ENCODE measurements at regions of chr2 and their contacts with region 1.

Region 1: DNA sequence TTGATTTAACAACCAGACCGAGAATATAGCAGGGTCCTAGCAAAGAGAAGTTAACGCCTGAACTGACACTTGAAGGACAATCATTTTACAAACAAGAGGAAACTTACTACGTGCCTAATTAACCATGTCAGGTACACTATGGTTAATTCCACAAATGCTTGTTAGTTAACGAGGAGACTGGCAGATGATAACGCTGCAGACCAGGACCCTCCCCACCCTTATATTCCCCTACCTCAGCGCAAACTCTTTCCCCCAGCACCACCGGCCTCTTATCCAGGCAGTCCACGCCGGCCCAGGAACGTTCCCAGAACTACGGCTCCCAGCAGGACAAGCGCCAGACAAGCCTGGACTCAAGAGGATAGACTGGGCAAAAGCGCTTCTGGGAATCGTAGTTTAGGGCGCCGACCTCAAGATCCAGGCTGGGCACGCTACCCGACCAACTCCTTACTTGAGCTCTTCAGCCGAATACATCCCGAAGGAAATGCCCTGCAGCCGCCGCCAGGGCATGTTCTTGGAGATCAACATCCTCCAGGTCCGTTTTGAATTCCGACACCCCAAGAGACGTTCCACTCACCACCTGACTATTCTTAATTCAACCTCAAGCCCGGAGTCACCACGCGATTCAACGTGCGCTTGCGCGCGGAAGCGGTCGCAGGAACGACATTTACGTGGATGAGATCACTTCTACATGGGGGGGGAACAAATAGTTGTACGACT is at the start of gene POLR1A:
- DNase-seq: peak; percentile 90
- ATAC-seq: peak; percentile 75
- H3K4me3 Mint-ChIP-seq: peak within 1 kb of the TSS; percentile 88
- H3K27ac Mint-ChIP-seq: peak within 1 kb of the TSS; percentile 99
- H3K4me1 Mint-ChIP-seq: peaks cover 54% of the 10 kb centered on the region
- H3K27me3 Mint-ChIP-seq: no peaks in the 10 kb centered on the region
- total RNA-seq, gene POLR1A: 38.1 to 45.5 TPM

Region 2: GRCh38 chr2:85354286-85355072 is 750.9 kb before region 1 on chr2 and contains the starts of genes ELMOD3 and RETSAT:
- CTCF ChIA-PET with region 1: interaction called, 4 read pairs
- POLR2A ChIA-PET with region 1: interaction called, 3 read pairs
- intact Hi-C with region 1: loop called in 1 of 2 experiments (anchors 2 kb)
- DNase-seq: peak; percentile 98
- ATAC-seq: peak; percentile 100
- H3K4me3 Mint-ChIP-seq: peak within 1 kb of the TSS; percentile 89
- H3K27ac Mint-ChIP-seq: peak within 1 kb of the TSS; percentile 99
- H3K4me1 Mint-ChIP-seq: peaks cover 34% of the 10 kb centered on the region
- H3K27me3 Mint-ChIP-seq: no peaks in the 10 kb centered on the region
- total RNA-seq, gene ELMOD3: 11.2 to 12.9 TPM
- total RNA-seq, gene RETSAT: 18.1 to 18.7 TPM

Region 3: DNA sequence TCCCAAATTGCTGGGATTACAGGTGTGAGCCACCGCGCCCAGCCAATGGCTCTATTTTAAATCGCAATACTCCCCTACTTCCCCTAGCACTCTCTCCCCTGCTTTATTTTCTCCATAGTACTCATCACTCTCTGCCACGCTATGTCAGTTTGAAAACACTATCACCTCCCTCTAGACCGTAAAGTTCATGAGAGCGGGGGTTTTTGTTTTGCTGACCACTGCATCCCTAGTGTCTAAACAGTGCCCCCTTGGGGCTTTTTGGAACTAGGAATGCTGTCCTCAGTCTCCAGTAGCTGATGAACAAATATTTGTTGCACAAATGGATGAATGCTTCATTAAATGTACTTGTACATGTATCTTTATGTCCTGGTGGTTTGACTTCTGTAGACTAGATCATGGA is 307.5 kb before region 1 on chr2:
- CTCF ChIA-PET with region 1: no interaction called
- POLR2A ChIA-PET with region 1: no interaction called
- intact Hi-C with region 1: no loop called
- DNase-seq: no peak
- ATAC-seq: no peak
- H3K4me3 Mint-ChIP-seq: no peak overlapping the region
- H3K27ac Mint-ChIP-seq: no peak overlapping the region
- H3K4me1 Mint-ChIP-seq: peaks cover 3% of the 10 kb centered on the region
- H3K27me3 Mint-ChIP-seq: peaks cover 5% of the 10 kb centered on the region

Region 4: DNA sequence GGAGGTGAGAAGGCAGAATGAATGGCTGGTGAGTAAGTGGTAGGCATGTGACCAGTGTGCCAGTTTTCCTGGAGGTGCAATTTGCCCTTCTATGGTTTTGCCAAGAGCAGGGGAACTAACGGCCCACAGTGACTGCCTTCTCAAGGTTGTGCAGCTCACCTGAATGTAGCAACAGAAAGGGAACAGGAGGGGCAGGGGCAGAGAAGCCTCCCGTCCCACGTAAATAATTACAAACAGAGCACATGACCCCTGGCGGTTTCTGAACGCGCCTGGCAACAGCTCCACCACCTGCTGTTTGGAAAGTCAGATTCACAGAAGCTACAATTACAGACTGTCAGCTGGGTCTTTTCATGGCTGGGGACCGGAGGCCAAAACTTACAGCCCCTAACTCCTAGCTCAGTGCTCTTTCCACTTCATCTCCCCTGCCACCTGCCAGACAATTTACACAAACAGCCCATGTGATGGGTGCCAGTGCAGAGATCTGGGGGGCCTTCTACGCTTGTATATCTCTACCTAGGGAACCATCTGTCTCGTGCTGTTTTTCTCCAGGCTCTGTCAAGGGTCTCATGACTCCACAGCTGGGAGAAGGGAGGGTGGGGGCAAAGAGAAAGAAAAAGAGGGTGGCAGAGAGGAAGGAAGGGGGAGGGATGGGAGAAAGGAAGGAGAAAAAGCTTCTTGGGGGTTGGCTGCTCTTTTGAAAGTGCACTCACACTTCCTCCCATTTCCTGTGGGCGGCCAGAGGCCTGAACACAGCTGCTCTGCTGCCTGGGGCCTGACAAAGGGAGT is 69.3 kb before region 1 on chr2:
- CTCF ChIA-PET with region 1: interaction called, 5 read pairs
- POLR2A ChIA-PET with region 1: interaction called, 3 read pairs
- intact Hi-C with region 1: loop called (anchors 1 kb)
- DNase-seq: peak; percentile 77
- ATAC-seq: peak; percentile 37
- H3K4me3 Mint-ChIP-seq: peak overlapping the region; percentile 10
- H3K27ac Mint-ChIP-seq: peak overlapping the region; percentile 97
- H3K4me1 Mint-ChIP-seq: peaks cover 70% of the 10 kb centered on the region
- H3K27me3 Mint-ChIP-seq: no peaks in the 10 kb centered on the region

Region 5: GRCh38 chr2:86195055-86195807 is 89.8 kb after region 1 on chr2 and contains the start of gene IMMT:
- CTCF ChIA-PET with region 1: interaction called, 4 read pairs
- POLR2A ChIA-PET with region 1: interaction called, 12 read pairs
- intact Hi-C with region 1: loop called (anchors 1 kb)
- DNase-seq: peak; percentile 97
- ATAC-seq: peak; percentile 93
- H3K4me3 Mint-ChIP-seq: peak within 1 kb of the TSS; percentile 81
- H3K27ac Mint-ChIP-seq: peak within 1 kb of the TSS; percentile 92
- H3K4me1 Mint-ChIP-seq: peaks cover 44% of the 10 kb centered on the region
- H3K27me3 Mint-ChIP-seq: no peaks in the 10 kb centered on the region
- total RNA-seq, gene IMMT: 172 to 182 TPM

Region 6: DNA sequence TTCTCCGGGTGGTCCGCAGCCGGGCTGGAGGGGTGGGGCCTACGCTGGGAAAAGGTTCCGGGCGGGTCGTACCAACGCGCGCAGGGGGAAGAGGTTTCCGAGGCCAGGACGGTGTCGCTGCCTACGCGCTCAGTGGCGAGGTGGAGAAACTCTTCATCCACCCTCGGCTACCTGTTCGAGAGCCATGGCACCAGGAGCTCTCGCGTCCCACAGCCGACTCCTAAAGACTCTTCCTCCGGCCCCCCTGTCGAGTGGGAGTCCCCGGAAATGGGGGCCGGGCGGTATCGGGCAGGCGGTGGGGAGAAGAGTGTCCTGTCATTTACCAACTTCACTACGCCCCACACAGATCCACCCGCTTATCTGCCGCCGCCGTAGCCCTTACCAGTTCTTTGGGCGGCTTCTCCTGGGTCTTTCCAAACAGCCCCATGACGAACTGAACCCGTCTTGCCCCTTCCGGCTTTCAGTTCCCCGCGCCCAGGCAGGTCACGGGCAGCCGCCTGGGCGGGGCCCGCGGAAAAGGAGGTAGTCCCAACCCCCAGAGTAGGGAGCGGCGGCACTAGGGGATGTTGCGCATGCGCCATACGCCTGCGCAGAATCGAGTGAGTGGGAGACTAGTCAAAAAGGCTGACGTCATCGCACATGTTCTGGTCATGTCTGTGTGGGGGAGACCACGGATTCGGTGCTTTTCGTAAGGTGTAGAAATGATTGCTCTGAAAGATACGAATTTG is 457.7 kb after region 1 on chr2 and contains the start of gene CHMP3:
- CTCF ChIA-PET with region 1: no interaction called
- POLR2A ChIA-PET with region 1: no interaction called
- intact Hi-C with region 1: loop called in 1 of 2 experiments (anchors 2 kb)
- DNase-seq: peak; percentile 97
- ATAC-seq: peak; percentile 92
- H3K4me3 Mint-ChIP-seq: peak within 1 kb of the TSS; percentile 95
- H3K27ac Mint-ChIP-seq: peak within 1 kb of the TSS; percentile 99
- H3K4me1 Mint-ChIP-seq: peaks cover 30% of the 10 kb centered on the region
- H3K27me3 Mint-ChIP-seq: no peaks in the 10 kb centered on the region
- total RNA-seq, gene CHMP3: 35.0 to 35.8 TPM

Measured in activated CD4-positive, alpha-beta T cell treated with anti-CD3 and anti-CD28 coated beads for 36 hours (primary cell).